Activated naive CD4-positive, alpha-beta T cell treated with anti-CD3 and anti-CD28 coated beads for 36 hours (primary cell): ENCODE measurements at regions of chr15 and their contacts with region 1.

Region 1: DNA sequence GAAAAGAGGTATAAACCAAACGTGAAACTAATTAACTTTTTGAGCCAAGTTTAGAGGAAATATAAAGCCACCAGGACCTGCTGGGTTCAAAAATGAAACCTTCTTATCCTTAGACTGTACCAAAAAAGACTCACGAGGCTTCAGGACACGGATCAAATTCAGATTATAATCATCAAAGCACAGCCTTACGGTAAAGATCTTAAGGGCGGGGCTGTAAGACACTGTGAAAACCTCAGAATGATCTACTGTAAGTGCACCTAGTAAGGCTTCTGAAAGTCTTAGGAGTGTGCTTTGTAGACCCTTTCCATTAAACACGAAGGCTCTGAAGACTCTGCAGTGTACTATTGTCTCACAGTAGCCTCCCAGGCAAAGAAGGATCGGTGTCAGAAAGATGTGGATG is 26.8 kb downstream of the TARS3 start:
- DNase-seq: peak; percentile 33
- H3K4me3 Mint-ChIP-seq: peak overlapping the region; percentile 60
- H3K27ac Mint-ChIP-seq: peak overlapping the region; percentile 89
- H3K4me1 Mint-ChIP-seq: peaks cover 42% of the 10 kb centered on the region
- H3K27me3 Mint-ChIP-seq: no peaks in the 10 kb centered on the region

Region 2: DNA sequence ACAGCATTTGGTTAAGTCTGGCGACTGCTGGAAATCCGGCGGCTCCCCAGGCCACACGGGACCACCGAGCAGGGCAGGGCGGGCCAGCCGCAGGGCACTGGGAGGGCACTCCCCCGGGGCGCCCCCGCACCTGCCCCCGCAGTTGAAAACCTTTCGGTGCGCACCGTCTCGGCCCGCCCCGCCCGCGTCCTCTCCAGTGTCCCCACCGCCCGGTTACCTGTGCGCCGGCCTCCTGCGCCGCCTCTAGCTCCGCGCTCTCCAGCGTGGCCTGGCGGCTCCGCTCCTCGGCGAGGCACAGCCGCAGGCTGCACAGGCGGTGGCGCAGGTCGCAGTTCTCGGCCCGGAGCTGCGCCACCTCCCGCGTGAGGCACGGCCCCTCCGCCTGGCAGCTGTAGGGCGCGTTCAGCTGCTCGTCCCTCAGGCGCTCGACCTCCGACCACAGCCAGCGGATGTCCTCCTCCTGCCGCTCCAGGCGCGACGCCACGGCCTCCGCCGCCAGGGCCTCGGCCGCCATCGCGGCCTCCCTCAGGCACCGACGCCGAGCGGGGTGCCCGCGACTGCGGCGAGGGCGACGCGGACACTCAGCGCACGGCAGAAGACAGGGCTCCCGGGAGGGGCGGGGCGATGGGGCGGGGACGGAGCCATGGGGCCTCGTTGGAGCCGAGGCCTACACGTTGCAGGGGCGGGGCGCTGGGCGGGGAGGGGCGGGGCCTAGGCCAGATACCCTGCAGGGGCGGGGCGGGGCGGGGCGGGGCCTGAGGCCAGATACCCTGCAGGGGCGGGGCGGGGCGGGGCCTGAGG is 26.6 kb after region 1 on chr15 and contains the start of gene TARS3:
- CTCF ChIA-PET with region 1: interaction called, 4 read pairs
- intact Hi-C with region 1: loop called (anchors 1 kb)
- DNase-seq: peak; percentile 96
- H3K4me3 Mint-ChIP-seq: peak within 1 kb of the TSS; percentile 85
- H3K27ac Mint-ChIP-seq: peak within 1 kb of the TSS; percentile 72
- H3K4me1 Mint-ChIP-seq: peaks cover 11% of the 10 kb centered on the region
- H3K27me3 Mint-ChIP-seq: no peaks in the 10 kb centered on the region
- total RNA-seq, gene TARS3: 6.9 to 8.0 TPM